PC-9 (cell line): ENCODE measurements at regions of chr2 and their contacts with region 1.

Region 1: DNA sequence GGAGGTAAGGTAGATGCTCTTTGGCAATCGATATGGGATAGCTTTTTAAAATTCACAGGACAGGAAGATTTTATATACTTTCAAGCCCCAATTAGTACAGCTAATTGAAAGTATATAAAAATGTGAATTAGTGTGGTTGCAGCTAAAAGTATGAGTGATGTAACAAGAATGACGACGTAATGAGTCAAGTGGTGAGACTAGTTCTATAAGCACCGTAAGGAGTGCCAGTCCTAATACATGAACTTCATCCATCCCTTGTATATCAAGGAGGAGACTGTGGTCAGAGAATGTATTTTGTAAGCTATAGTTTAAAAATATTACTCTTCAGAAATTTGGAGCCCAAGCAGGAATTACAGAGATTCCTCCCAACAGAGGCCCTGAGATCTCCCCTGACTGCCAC is 25.8 kb downstream of the DNAJC27 start:
- DNase-seq: no peak
- H3K4me3 ChIP-seq: no peak overlapping the region
- H3K27ac ChIP-seq: no peak overlapping the region
- H3K4me1 ChIP-seq: no peaks in the 10 kb centered on the region
- H3K27me3 ChIP-seq: no peaks in the 10 kb centered on the region
- CTCF ChIP-seq: no peak

Region 2: GRCh38 chr2:25078171-25079049 is 132.5 kb after region 1 on chr2:
- CTCF ChIA-PET with region 1: no interaction called
- POLR2A ChIA-PET with region 1: interaction called, 25 read pairs
- intact Hi-C with region 1: no loop called
- DNase-seq: peak; percentile 64 to 98
- H3K4me3 ChIP-seq: peak overlapping the region; percentile 23; the same call in 1 of the 2 replicates
- H3K27ac ChIP-seq: peak overlapping the region; percentile 33
- H3K4me1 ChIP-seq: peaks cover 19% of the 10 kb centered on the region
- H3K27me3 ChIP-seq: peaks cover 53% of the 10 kb centered on the region
- CTCF ChIP-seq: no peak